GM12878 (cell line): ENCODE measurements at regions of chr11 and their contacts with region 1.

Region 1: GRCh38 chr11:95150946-95151684 is 61.5 kb downstream of the ENDOD1 start:
- DNase-seq: peak; percentile 77
- ATAC-seq: peak; percentile 89
- H3K4me3 ChIP-seq: peak overlapping the region; percentile 80
- H3K27ac ChIP-seq: peak overlapping the region; percentile 56
- H3K4me1 ChIP-seq: peaks cover 2% of the 10 kb centered on the region; the same call in 1 of the 2 replicates
- H3K27me3 ChIP-seq: no peaks in the 10 kb centered on the region
- CTCF ChIP-seq: peak; percentile 79 to 97 (median 87)
- EP300 ChIP-seq: no peak
- POLR2A ChIP-seq: peak; percentile 75
- RAD21 ChIP-seq: peak; percentile 38; the same call in 1 of the 2 replicates

Region 2: GRCh38 chr11:95067039-95067840 is 83.9 kb before region 1 on chr11:
- CTCF ChIA-PET with region 1: interaction called, 459 read pairs
- POLR2A ChIA-PET with region 1: interaction called, 11 read pairs
- RAD21 ChIA-PET with region 1: interaction called, 70 read pairs
- SMC1A ChIA-PET with region 1: interaction called, 158 read pairs
- in situ Hi-C with region 1: no loop called
- intact Hi-C with region 1: loop called (anchors 1 kb)
- DNase-seq: no peak
- ATAC-seq: peak; percentile 80
- H3K4me3 ChIP-seq: peak overlapping the region; percentile 99
- H3K27ac ChIP-seq: peak overlapping the region; percentile 75
- H3K4me1 ChIP-seq: 0 out of 2 replicates have a peak, but pooled peaks cover 3% of the 10 kb centered on the region
- H3K27me3 ChIP-seq: no peaks in the 10 kb centered on the region
- CTCF ChIP-seq: peak; percentile 40 to 63 (median 54)
- EP300 ChIP-seq: no peak
- POLR2A ChIP-seq: peak; percentile 90
- RAD21 ChIP-seq: 0 out of 2 replicates have a peak, but pooled peaks have one; percentile 15

Region 3: GRCh38 chr11:95121698-95122097 is 29.4 kb before region 1 on chr11:
- CTCF ChIA-PET with region 1: no interaction called
- POLR2A ChIA-PET with region 1: no interaction called
- RAD21 ChIA-PET with region 1: no interaction called
- SMC1A ChIA-PET with region 1: no interaction called
- in situ Hi-C with region 1: no loop called
- intact Hi-C with region 1: no loop called
- DNase-seq: no peak
- ATAC-seq: no peak
- H3K4me3 ChIP-seq: no peak overlapping the region
- H3K27ac ChIP-seq: no peak overlapping the region
- H3K4me1 ChIP-seq: no peaks in the 10 kb centered on the region
- H3K27me3 ChIP-seq: no peaks in the 10 kb centered on the region
- CTCF ChIP-seq: no peak
- EP300 ChIP-seq: no peak
- POLR2A ChIP-seq: no peak
- RAD21 ChIP-seq: no peak

Region 4: GRCh38 chr11:95170294-95170693 is 19.2 kb after region 1 on chr11:
- CTCF ChIA-PET with region 1: interaction called, 6 read pairs
- POLR2A ChIA-PET with region 1: no interaction called
- RAD21 ChIA-PET with region 1: interaction called, 5 read pairs
- SMC1A ChIA-PET with region 1: interaction called, 10 read pairs
- in situ Hi-C with region 1: no loop called
- intact Hi-C with region 1: no loop called
- DNase-seq: no peak
- ATAC-seq: no peak
- H3K4me3 ChIP-seq: no peak overlapping the region
- H3K27ac ChIP-seq: no peak overlapping the region
- H3K4me1 ChIP-seq: no peaks in the 10 kb centered on the region
- H3K27me3 ChIP-seq: no peaks in the 10 kb centered on the region
- CTCF ChIP-seq: no peak
- EP300 ChIP-seq: no peak
- POLR2A ChIP-seq: no peak
- RAD21 ChIP-seq: no peak

Region 5: DNA sequence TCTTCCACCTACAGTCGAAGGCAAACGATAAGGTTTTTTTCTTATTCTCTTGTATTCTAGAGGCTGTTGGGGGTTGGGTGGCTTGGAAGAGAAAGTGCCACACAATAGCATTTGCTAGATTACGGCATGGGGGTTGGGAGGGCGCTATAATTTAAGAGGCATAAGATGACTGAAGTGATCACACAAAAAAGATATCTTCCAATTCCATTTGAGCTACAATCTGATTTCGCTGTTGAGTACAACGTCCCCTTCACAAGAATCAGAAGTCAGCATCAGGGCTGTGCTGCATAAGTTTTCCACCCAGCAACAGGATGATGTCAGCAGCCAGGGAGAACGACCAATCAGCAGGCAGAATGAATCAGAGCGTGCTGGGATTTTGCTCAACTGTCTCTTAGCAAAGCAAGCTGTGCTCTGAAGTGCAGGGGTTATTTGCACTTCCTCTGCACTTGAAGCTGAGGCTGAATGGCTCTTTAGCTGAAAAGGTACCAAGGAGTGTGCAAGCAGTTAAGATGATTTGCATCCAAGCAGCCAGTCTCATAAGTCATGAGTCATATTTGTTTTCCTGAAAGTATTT is 103.1 kb after region 1 on chr11:
- CTCF ChIA-PET with region 1: interaction called, 13 read pairs
- POLR2A ChIA-PET with region 1: interaction called, 3 read pairs
- RAD21 ChIA-PET with region 1: interaction called, 14 read pairs
- SMC1A ChIA-PET with region 1: interaction called, 31 read pairs
- in situ Hi-C with region 1: no loop called
- intact Hi-C with region 1: loop called (anchors 2 kb)
- DNase-seq: peak; percentile 96
- ATAC-seq: peak; percentile 96
- H3K4me3 ChIP-seq: 0 out of 2 replicates have a peak overlapping the region, but pooled peaks have one; percentile 0
- H3K27ac ChIP-seq: peak overlapping the region; percentile 77
- H3K4me1 ChIP-seq: peaks cover 47% of the 10 kb centered on the region
- H3K27me3 ChIP-seq: no peaks in the 10 kb centered on the region
- CTCF ChIP-seq: no peak
- EP300 ChIP-seq: peak in 1 of 2 experiments; percentile 63; a peak in 2 of 4 replicates
- POLR2A ChIP-seq: peak; percentile 64
- RAD21 ChIP-seq: no peak

Region 6: GRCh38 chr11:95556342-95557163 is 405.4 kb after region 1 on chr11:
- CTCF ChIA-PET with region 1: interaction called, 5 read pairs
- POLR2A ChIA-PET with region 1: no interaction called
- RAD21 ChIA-PET with region 1: interaction called, 12 read pairs
- SMC1A ChIA-PET with region 1: interaction called, 4 read pairs
- in situ Hi-C with region 1: no loop called
- intact Hi-C with region 1: loop called (anchors 5 kb)
- DNase-seq: peak; percentile 75
- ATAC-seq: peak; percentile 91
- H3K4me3 ChIP-seq: peak overlapping the region; percentile 22; the same call in 1 of the 2 replicates
- H3K27ac ChIP-seq: peak overlapping the region; percentile 86
- H3K4me1 ChIP-seq: peaks cover 21% of the 10 kb centered on the region
- H3K27me3 ChIP-seq: no peaks in the 10 kb centered on the region
- CTCF ChIP-seq: no peak
- EP300 ChIP-seq: peak; percentile 88 to 89
- POLR2A ChIP-seq: no peak
- RAD21 ChIP-seq: no peak

Region 7: DNA sequence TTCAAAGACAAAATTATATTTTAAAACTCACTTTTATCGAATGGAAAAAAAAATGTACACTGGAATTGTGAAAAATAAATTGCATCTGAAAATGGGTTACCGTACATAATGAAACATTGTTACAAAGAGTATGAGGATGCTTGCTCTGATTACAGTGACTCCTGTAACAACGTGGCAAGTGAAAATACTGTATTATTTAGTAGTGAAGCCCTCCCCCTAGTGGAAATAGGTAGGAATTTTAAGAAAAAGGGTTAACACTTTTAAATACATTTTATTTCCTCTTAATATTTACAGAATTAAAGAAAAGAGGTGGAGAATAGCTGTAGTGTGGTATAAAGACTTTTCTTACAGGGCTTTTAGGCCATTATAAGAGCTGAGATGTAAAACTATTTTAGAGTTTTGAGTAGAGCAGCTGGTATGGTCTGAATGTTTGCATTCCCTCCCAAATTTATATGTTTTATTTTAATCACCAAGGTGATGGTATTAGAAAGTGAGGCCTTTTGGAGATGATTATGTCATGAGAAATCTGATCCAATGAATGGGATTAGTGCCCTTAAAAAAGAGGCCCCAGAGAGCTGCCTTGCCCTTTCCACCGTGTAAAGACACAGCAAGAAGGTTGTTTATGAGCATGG is 613.3 kb after region 1 on chr11:
- CTCF ChIA-PET with region 1: interaction called, 324 read pairs
- POLR2A ChIA-PET with region 1: interaction called, 4 read pairs
- RAD21 ChIA-PET with region 1: interaction called, 215 read pairs
- SMC1A ChIA-PET with region 1: interaction called, 249 read pairs
- in situ Hi-C with region 1: loop called (anchors 5 kb)
- intact Hi-C with region 1: loop called (anchors 1 kb)
- DNase-seq: no peak
- ATAC-seq: peak; percentile 91
- H3K4me3 ChIP-seq: no peak overlapping the region
- H3K27ac ChIP-seq: no peak overlapping the region
- H3K4me1 ChIP-seq: no peaks in the 10 kb centered on the region
- H3K27me3 ChIP-seq: no peaks in the 10 kb centered on the region
- CTCF ChIP-seq: peak; percentile 43 to 66 (median 46); a peak in 5 of 6 replicates
- EP300 ChIP-seq: no peak
- POLR2A ChIP-seq: no peak
- RAD21 ChIP-seq: peak; percentile 83

Region 8: DNA sequence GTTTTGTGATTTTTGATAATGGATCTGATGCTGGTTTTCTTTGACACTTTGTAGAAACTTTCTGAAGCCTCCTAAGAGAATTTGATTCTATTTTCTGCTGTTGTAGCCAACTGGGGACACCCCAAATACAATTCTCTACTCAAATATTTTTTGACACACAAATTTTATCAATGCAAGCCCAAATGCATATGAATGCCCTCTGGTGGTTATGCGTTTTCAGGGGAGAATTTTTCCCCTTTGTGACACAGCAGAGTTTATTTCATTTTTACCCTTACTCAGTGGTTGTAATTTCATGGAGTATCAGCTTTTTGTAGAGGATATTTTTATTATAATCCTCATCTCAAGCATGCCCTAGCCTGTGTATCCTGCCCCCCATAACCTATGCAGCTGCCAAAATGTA is 817.5 kb after region 1 on chr11:
- CTCF ChIA-PET with region 1: no interaction called
- POLR2A ChIA-PET with region 1: no interaction called
- RAD21 ChIA-PET with region 1: no interaction called
- SMC1A ChIA-PET with region 1: interaction called, 3 read pairs
- in situ Hi-C with region 1: no loop called
- intact Hi-C with region 1: loop called (anchors 5 kb)
- DNase-seq: no peak
- ATAC-seq: no peak
- H3K4me3 ChIP-seq: no peak overlapping the region
- H3K27ac ChIP-seq: no peak overlapping the region
- H3K4me1 ChIP-seq: no peaks in the 10 kb centered on the region
- H3K27me3 ChIP-seq: no peaks in the 10 kb centered on the region
- CTCF ChIP-seq: peak in 2 of 3 experiments; percentile 24 to 26; a peak in 2 of 6 replicates
- EP300 ChIP-seq: no peak
- POLR2A ChIP-seq: no peak
- RAD21 ChIP-seq: 0 out of 2 replicates have a peak, but pooled peaks have one; percentile 10

Region 9: DNA sequence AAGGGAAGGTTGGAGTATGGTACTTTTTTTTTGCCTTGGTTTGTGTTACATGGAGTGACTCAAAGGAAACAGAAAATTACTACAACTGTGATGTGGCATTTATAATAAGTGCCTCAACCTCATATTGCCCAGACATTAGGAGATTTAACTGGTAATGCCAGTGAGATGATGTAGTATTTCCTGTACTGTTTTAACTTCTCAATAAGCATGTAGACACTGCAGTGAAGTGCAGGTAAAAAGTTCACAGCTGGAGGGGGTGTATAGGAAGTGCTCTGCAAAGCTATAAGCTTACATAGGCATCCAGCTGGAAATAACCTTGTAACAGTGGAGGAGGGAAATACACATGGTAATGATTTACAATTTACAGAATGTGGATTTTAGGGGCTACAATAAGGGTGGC is 911.0 kb after region 1 on chr11:
- CTCF ChIA-PET with region 1: no interaction called
- POLR2A ChIA-PET with region 1: no interaction called
- RAD21 ChIA-PET with region 1: no interaction called
- SMC1A ChIA-PET with region 1: no interaction called
- in situ Hi-C with region 1: no loop called
- intact Hi-C with region 1: no loop called
- DNase-seq: no peak
- ATAC-seq: peak; percentile 88
- H3K4me3 ChIP-seq: no peak overlapping the region
- H3K27ac ChIP-seq: no peak overlapping the region
- H3K4me1 ChIP-seq: no peaks in the 10 kb centered on the region
- H3K27me3 ChIP-seq: no peaks in the 10 kb centered on the region
- CTCF ChIP-seq: no peak
- EP300 ChIP-seq: no peak
- POLR2A ChIP-seq: no peak
- RAD21 ChIP-seq: no peak